ENCODE measurements at regions of chr6 and their contacts with region 1.

Region 1: GRCh38 chr6:133512410-133513016 is 271.4 kb downstream of the EYA4 start:
- DNase-seq: peak; percentile 12
- H3K4me3 ChIP-seq: no peak overlapping the region
- H3K27ac ChIP-seq: no peak overlapping the region
- H3K4me1 ChIP-seq: no peaks in the 10 kb centered on the region
- H3K27me3 ChIP-seq: no peaks in the 10 kb centered on the region
- CTCF ChIP-seq: peak; percentile 56 to 72

Region 2: DNA sequence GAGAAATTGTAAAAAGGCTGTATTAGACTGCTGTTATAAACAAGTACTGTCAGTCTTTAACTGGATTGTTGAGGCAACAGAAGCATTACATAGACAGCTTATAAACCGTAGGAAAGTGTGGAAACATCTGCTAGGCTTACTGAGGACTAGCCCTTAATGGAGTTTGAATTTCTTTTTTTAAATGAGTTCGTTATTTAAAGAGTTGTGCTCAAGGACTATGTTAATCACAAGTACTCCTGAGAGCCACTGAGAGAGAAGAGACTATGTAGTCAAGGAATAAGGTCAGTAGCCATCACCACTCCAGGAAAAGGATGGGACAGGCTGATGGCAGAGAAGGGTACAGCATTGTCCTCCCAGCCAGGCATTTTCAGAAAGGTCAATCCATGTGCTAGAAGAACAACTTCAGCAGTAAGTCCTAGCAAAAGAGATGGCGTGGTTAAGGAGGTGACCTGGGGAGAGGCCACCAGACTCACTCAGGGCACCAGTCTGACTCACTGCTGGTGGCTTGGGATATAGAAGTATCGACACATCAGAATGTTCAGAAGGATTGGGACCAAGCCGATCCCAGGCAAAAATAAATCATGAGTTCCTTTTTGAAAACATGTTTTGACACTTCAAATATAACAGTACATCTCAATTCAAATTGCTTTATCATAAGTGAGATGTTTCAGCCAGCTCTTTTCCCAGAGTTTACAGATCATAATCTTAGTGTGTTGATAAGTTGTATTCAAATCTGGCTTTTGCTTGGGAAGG is 691.7 kb before region 1 on chr6:
- CTCF ChIA-PET with region 1: no interaction called
- dilution Hi-C with region 1: no loop called
- in situ Hi-C with region 1: loop called in 1 of 2 experiments (anchors 10 kb)
- intact Hi-C with region 1: no loop called
- DNase-seq: peak; percentile 20
- H3K4me3 ChIP-seq: no peak overlapping the region
- H3K27ac ChIP-seq: no peak overlapping the region
- H3K4me1 ChIP-seq: peaks cover 17% of the 10 kb centered on the region
- H3K27me3 ChIP-seq: no peaks in the 10 kb centered on the region
- CTCF ChIP-seq: no peak

Region 3: GRCh38 chr6:132830334-132830751 is 682.2 kb before region 1 on chr6:
- CTCF ChIA-PET with region 1: no interaction called
- dilution Hi-C with region 1: no loop called
- in situ Hi-C with region 1: loop called in 1 of 2 experiments (anchors 10 kb)
- intact Hi-C with region 1: loop called (anchors 1 kb)
- DNase-seq: no peak
- H3K4me3 ChIP-seq: no peak overlapping the region
- H3K27ac ChIP-seq: no peak overlapping the region
- H3K4me1 ChIP-seq: no peaks in the 10 kb centered on the region
- H3K27me3 ChIP-seq: no peaks in the 10 kb centered on the region
- CTCF ChIP-seq: peak; percentile 38 to 66

Region 4: GRCh38 chr6:133040094-133040802 is 472.3 kb before region 1 on chr6:
- CTCF ChIA-PET with region 1: interaction called, 4 read pairs
- dilution Hi-C with region 1: no loop called
- in situ Hi-C with region 1: no loop called
- intact Hi-C with region 1: loop called (anchors 10 kb)
- DNase-seq: peak; percentile 6
- H3K4me3 ChIP-seq: no peak overlapping the region
- H3K27ac ChIP-seq: no peak overlapping the region
- H3K4me1 ChIP-seq: no peaks in the 10 kb centered on the region
- H3K27me3 ChIP-seq: peaks cover 2% of the 10 kb centered on the region
- CTCF ChIP-seq: peak; percentile 29 to 64

Region 5: DNA sequence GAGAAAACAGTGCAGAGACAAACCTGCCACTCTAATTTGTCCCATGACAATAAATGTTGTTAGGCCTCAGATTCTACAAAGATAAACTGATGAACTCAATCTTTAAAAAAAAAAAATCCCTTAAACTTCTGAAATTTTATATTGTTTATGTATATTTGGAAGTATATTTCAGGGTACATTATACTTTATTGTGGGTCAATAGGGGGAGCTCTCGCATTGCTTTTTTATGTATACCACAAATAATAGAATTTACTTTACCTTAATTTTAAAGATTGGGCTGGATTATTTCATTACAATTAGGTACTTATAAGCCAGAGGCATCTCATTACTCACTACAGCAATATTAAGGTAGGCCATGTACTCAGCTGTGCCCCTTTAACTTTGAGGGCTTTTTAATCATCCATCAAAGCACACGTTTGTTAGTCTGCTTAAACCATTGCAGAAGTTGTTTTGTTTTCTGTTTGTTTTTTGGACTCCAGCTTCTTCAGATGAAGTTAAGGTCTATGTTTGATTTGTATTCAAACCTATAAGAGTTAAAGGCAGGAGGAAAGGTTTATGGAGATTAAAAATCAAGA is 327.6 kb before region 1 on chr6:
- CTCF ChIA-PET with region 1: no interaction called
- dilution Hi-C with region 1: no loop called
- in situ Hi-C with region 1: loop called in 1 of 2 experiments (anchors 10 kb)
- intact Hi-C with region 1: loop called (anchors 1 kb)
- DNase-seq: no peak
- H3K4me3 ChIP-seq: no peak overlapping the region
- H3K27ac ChIP-seq: no peak overlapping the region
- H3K4me1 ChIP-seq: no peaks in the 10 kb centered on the region
- H3K27me3 ChIP-seq: peaks cover 7% of the 10 kb centered on the region
- CTCF ChIP-seq: peak; percentile 54

Region 6: DNA sequence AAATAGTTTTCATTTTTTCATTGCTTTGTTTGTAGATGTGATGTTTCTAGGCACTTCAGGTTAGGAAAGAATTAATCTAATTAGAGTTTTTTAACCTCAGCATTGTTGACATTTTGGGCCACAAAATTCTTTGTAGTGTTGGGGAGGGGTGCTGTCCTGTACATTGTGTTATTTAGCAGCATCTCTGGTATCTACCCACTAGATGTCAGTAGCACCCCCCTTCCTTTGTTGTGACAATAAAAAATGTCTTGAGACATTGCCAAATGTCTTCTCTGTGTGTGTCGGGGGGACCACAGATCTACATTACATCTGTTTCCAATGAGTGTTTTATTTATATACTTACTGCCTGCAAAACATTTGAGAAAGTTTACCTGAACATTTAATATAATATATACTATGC is 225.7 kb before region 1 on chr6:
- CTCF ChIA-PET with region 1: no interaction called
- dilution Hi-C with region 1: no loop called
- in situ Hi-C with region 1: no loop called
- intact Hi-C with region 1: loop called (anchors 1 kb)
- DNase-seq: no peak
- H3K4me3 ChIP-seq: no peak overlapping the region
- H3K27ac ChIP-seq: no peak overlapping the region
- H3K4me1 ChIP-seq: no peaks in the 10 kb centered on the region
- H3K27me3 ChIP-seq: peaks cover 4% of the 10 kb centered on the region
- CTCF ChIP-seq: peak; percentile 13 to 51

Region 7: GRCh38 chr6:133466666-133467065 is 45.8 kb before region 1 on chr6:
- CTCF ChIA-PET with region 1: no interaction called
- dilution Hi-C with region 1: no loop called
- in situ Hi-C with region 1: no loop called
- intact Hi-C with region 1: no loop called
- DNase-seq: no peak
- H3K4me3 ChIP-seq: no peak overlapping the region
- H3K27ac ChIP-seq: no peak overlapping the region
- H3K4me1 ChIP-seq: no peaks in the 10 kb centered on the region
- H3K27me3 ChIP-seq: peaks cover 4% of the 10 kb centered on the region
- CTCF ChIP-seq: no peak

Region 8: GRCh38 chr6:133553652-133554051 is 41.1 kb after region 1 on chr6:
- CTCF ChIA-PET with region 1: no interaction called
- dilution Hi-C with region 1: no loop called
- in situ Hi-C with region 1: no loop called
- intact Hi-C with region 1: loop called (anchors 1 kb)
- DNase-seq: peak; percentile 15
- H3K4me3 ChIP-seq: no peak overlapping the region
- H3K27ac ChIP-seq: no peak overlapping the region
- H3K4me1 ChIP-seq: no peaks in the 10 kb centered on the region
- H3K27me3 ChIP-seq: peaks cover 6% of the 10 kb centered on the region
- CTCF ChIP-seq: peak; percentile 61 to 73